OCI-LY7 (cell line): ENCODE measurements at regions of chr12 and their contacts with region 1.

Region 1: DNA sequence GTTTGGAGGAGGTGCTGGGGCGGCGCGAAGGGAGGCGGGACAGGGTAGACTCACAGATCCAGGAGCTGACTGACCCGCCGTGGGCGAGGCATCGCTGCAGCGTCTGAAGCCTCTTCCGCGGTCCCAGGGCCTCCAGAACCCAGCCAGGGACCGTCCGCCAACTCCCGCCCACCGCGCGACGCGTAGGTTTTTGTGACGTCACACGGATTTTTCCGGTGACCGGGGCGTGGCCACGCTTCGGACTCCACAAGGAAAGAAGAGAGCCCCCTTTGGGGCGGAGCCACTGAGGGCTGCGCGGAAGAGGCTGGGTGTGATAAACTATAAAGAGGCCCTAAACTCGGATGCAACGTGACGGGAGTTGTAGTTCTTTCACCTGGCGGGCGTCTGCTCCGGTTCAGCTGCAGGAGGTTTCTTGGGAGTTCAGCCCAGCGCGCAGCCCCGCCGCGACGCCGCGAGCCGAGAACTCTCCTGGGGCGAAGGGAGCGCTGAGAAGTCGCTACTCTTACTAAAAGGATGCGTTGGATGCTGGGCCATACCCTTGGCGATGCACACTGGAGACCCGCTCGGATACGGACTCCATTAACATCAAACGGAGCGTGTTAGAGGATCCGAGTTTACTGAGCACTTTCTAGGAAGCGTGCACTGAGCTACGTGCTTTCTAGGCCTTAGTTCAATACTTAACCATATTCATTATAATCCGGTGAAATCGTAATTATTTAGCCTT is at the start of gene AMN1:
- DNase-seq: peak; percentile 100
- H3K4me3 ChIP-seq: peak within 1 kb of the TSS; percentile 76
- H3K27ac ChIP-seq: peak within 1 kb of the TSS; percentile 81
- H3K4me1 ChIP-seq: peaks cover 61% of the 10 kb centered on the region
- CTCF ChIP-seq: no peak
- total RNA-seq, gene AMN1: 14.1 and 20.1 TPM in 2 replicates

Region 2: DNA sequence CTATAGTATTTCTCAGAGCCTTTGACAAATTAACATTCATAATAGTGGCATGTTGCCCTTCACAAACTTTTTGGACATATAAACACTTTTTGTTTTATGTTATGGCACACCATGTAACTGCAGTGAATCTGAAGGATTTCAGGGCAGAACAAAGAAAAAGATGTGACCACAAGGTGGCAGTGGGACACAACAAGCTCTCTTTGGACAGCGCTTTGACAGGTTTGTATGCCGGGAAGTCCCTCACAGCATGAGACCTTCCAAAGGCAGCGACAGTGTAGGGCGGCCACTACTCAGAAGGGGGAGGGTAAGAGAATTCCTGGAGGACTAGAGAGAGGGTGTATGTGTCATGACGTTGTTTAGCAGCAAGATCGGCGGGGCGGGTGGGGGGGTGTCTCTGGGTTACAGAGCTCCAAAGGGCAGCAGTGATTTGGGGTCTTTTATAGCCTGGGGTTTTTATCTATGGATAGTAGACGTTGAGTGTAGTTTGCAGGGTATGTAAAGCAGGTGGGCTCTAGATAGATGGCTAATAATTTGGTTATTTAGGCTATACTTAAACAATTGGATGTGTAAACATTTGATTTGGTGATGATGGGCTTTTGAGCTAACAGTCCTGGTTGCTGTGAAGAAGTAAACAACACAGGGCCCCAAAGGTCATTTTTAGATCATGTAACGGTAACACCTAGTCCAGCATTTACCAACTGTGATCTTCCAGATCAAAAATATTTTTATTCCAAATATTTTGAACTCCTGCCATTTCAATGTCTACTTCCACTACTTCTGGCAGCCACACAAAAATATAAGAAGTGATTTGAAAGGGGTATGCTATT is 46.7 kb before region 1 on chr12:
- CTCF ChIA-PET with region 1: no interaction called
- POLR2A ChIA-PET with region 1: interaction called, 5 read pairs
- intact Hi-C with region 1: loop called (anchors 1 kb)
- DNase-seq: peak; percentile 95
- H3K4me3 ChIP-seq: no peak overlapping the region
- H3K27ac ChIP-seq: peak overlapping the region; percentile 56
- H3K4me1 ChIP-seq: peaks cover 34% of the 10 kb centered on the region
- CTCF ChIP-seq: peak; percentile 92

Region 3: DNA sequence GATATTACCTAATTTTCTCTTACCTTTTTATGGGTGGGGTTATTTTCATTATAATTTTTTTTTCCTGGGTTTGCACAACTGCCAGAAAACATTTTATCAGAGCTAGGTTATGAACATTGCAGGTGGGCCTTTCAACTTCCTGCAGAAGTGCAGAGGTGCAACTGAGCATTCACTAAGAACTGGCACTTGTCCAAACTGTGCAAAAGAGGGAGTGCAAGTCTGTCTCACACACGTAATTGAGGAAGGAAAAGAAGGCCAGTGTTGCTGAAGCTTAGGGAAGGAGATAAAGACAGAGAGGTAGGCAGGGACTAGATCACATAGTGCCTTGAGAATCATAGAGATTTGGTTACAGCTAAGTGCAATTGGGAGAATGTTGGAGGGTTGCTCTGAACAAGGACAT is 13.8 kb after region 1 on chr12:
- CTCF ChIA-PET with region 1: no interaction called
- POLR2A ChIA-PET with region 1: interaction called, 47 read pairs
- intact Hi-C with region 1: loop called (anchors 2 kb)
- DNase-seq: peak; percentile 89
- H3K4me3 ChIP-seq: no peak overlapping the region
- H3K27ac ChIP-seq: peak overlapping the region; percentile 79
- H3K4me1 ChIP-seq: peaks cover 68% of the 10 kb centered on the region
- CTCF ChIP-seq: no peak; the same call in 1 of the 2 replicates

Region 4: GRCh38 chr12:31896514-31897039 is 167.5 kb after region 1 on chr12:
- CTCF ChIA-PET with region 1: no interaction called
- POLR2A ChIA-PET with region 1: interaction called, 4 read pairs
- intact Hi-C with region 1: loop called (anchors 5 kb)
- DNase-seq: peak; percentile 100
- H3K4me3 ChIP-seq: peak overlapping the region; percentile 54
- H3K27ac ChIP-seq: peak overlapping the region; percentile 96
- H3K4me1 ChIP-seq: peaks cover 37% of the 10 kb centered on the region
- CTCF ChIP-seq: no peak